ENCODE measurements at regions of chr7 and their contacts with region 1.

Region 1: DNA sequence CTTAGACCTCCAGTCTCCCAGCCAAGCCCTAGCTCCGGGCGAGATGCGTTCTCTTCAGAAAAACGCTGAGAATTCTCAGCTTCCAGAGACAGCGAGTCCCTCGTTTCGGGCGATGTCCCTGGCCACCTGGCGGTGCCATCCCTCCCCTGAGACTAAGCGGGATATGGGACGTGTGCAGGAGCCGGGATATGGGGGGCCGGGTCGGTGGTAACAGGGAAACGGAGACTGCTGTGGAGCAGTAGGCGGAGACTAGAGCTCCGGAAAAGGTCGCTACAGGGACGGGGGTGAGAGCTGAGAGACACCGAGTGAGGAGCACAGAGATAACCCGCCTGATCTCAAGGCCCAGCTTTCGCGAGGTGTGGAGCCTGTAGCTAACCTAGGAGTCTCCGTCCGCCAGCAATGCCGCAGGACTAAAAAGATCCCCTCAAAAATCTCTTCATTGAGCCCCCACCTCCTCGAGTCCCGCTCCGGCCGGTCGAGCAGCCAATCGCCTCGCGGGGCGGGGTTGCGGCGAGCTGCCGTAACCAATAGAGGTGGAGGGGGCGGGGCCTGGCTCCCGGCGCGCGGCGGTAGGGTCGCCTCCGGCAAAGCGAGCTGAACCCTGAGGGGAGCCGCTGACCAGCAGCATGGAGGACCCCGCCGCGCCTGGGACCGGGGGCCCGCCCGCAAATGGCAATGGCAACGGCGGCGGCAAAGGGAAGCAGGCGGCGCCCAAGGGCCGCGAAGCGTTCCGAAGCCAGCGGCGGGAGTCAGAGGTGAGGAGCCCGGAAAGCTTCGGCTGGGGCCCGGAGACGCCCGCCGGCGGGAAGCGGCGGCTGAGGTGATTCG is at the start of gene STRIP2:
- DNase-seq: peak; percentile 98 to 99 (median 99)
- ATAC-seq: peak; percentile 90
- H3K4me3 ChIP-seq: peak within 1 kb of the TSS; percentile 60
- H3K27ac ChIP-seq: peak within 1 kb of the TSS; percentile 67
- H3K4me1 ChIP-seq: peaks cover 37 to 50% of the 10 kb centered on the region in 2 experiments
- H3K27me3 ChIP-seq: no peaks in the 10 kb centered on the region
- CTCF ChIP-seq: 0 out of 6 replicates have a peak, but pooled peaks of 2 of the 3 experiments have one; percentile 18 to 20
- EP300 ChIP-seq: 0 out of 2 replicates have a peak, but pooled peaks have one; percentile 12
- POLR2A ChIP-seq: peak; percentile 98
- RAD21 ChIP-seq: no peak
- polyA plus RNA-seq, gene STRIP2: 10.1 to 13.8 TPM

Region 2: DNA sequence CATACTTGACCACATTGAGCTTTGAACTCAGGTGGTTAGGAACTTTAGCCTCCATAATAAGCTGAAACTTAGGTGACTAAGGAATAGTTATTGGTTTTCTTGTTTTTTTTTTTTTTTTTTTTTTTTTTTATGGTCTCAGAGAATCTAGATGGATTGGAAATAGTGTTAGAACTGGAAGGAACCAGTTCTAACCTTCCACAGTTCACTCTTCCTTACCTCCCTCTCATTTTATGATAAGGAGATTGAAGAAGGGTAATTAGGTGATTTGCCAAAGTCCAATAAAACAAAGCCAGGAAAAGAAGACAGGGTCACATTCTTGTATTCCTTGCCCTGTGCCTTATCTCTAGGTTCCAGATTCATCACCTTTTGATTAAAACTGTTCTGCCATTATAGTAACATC is 71.6 kb before region 1 on chr7:
- CTCF ChIA-PET with region 1: no interaction called
- POLR2A ChIA-PET with region 1: interaction called, 10 read pairs
- in situ Hi-C with region 1: no loop called
- intact Hi-C with region 1: no loop called
- DNase-seq: no peak
- ATAC-seq: no peak
- H3K4me3 ChIP-seq: no peak overlapping the region
- H3K27ac ChIP-seq: no peak overlapping the region
- H3K4me1 ChIP-seq: peaks cover 0 to 6% of the 10 kb centered on the region in 2 experiments; a peak in 3 of 5 replicates
- H3K27me3 ChIP-seq: no peaks in the 10 kb centered on the region
- CTCF ChIP-seq: no peak
- EP300 ChIP-seq: no peak
- POLR2A ChIP-seq: no peak
- RAD21 ChIP-seq: no peak

Region 3: GRCh38 chr7:129401967-129402860 is 31.8 kb before region 1 on chr7:
- CTCF ChIA-PET with region 1: no interaction called
- POLR2A ChIA-PET with region 1: interaction called, 11 read pairs
- in situ Hi-C with region 1: no loop called
- intact Hi-C with region 1: loop called (anchors 1 kb)
- DNase-seq: peak in 2 of 4 experiments; percentile 55 to 70
- ATAC-seq: peak; percentile 84
- H3K4me3 ChIP-seq: no peak overlapping the region
- H3K27ac ChIP-seq: peak overlapping the region; percentile 65; the same call in 2 of the 3 replicates
- H3K4me1 ChIP-seq: peaks cover 6 to 21% of the 10 kb centered on the region in 2 experiments; a peak in 4 of 5 replicates
- H3K27me3 ChIP-seq: no peaks in the 10 kb centered on the region
- CTCF ChIP-seq: peak; percentile 67 to 86 (median 68)
- EP300 ChIP-seq: no peak
- POLR2A ChIP-seq: no peak
- RAD21 ChIP-seq: peak; percentile 73 to 84

Region 4: DNA sequence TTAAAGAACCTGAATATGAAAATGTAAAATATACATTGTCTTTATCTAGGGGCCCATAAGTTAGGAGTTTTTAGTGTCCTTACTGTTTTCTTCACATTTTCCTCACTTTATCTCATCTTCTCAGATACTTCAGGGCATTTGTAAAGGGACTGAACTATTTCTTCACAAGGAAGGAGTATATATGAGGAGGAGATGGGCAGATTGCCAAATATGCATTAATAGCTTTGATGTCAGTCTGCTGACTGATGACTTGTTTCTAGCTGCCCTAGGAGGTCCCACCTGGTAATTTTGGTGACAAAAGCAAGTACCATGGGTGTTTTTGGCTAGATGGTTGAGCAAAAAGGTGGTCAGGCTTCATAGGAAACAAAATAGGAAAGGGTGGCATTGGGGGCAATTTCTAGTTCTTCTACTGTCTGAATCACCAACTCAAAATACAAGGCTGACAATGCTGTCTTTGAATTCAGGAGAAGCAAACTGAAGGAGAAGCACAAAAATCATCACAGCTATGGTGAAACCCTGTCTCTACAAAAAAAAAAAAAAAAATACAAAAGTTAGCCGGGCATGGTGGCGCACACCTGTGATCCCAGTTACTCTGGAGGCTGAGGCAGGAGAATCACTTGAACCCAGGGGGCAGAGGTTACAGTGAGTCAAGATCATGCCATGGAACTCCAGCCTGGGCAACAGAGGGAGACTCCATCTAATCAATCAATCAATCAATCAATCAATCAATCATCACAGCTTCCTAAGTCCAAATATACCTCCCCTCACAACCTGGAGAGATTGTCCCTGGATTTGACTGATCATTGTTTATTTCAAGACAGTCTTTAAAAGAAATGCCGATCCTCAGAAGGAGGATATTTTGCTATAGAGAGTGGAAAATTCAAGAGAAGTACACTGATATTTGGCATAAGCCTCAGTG is 10.1 kb before region 1 on chr7:
- CTCF ChIA-PET with region 1: no interaction called
- POLR2A ChIA-PET with region 1: interaction called, 44 read pairs
- in situ Hi-C with region 1: no loop called
- intact Hi-C with region 1: loop called (anchors 2 kb)
- DNase-seq: peak; percentile 67 to 87 (median 72)
- ATAC-seq: peak; percentile 80
- H3K4me3 ChIP-seq: no peak overlapping the region
- H3K27ac ChIP-seq: no peak overlapping the region
- H3K4me1 ChIP-seq: peaks cover 7 to 23% of the 10 kb centered on the region in 2 experiments; a peak in 4 of 5 replicates
- H3K27me3 ChIP-seq: no peaks in the 10 kb centered on the region
- CTCF ChIP-seq: no peak
- EP300 ChIP-seq: peak; percentile 74
- POLR2A ChIP-seq: no peak
- RAD21 ChIP-seq: no peak; a peak in 1 of 4 replicates

Region 5: DNA sequence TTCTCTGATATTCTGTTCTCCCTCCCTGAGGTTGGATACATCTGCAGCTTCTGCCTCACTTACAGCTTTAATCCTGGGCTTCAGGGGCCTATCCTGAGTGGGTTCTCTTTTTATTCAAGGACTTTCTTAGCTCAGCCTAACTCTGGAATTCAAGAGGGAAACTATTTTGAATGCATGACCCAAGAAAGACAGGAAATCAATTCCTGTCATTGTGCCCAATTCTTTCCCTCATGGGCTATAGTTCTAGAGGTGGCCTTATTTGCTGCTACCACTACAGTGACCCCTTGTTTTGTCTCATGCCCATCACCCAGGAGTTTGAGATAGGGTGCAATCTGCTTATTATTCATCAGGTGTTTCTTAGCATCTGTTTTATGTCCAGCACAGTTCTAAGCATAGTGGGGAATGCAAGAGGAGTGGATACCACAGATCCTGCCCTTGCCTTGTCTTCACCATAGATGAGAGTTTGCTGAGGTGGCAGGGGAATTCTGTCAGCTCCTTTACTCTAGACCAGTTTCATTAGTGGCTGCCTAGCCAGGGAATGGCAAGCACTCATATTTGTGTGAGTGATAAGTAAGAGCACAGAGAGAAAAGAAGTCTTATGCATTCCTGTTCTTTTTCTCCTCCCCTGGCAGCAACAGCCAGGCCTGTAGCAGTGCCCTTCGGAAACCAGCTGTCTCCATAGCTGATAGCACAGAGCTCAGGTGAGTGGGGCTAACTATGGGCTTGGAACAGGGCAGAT is 19.6 kb after region 1 on chr7:
- CTCF ChIA-PET with region 1: no interaction called
- POLR2A ChIA-PET with region 1: interaction called, 26 read pairs
- in situ Hi-C with region 1: no loop called
- intact Hi-C with region 1: no loop called
- DNase-seq: no peak
- ATAC-seq: no peak
- H3K4me3 ChIP-seq: no peak overlapping the region
- H3K27ac ChIP-seq: no peak overlapping the region
- H3K4me1 ChIP-seq: no peaks in the 10 kb centered on the region
- H3K27me3 ChIP-seq: no peaks in the 10 kb centered on the region
- CTCF ChIP-seq: no peak
- EP300 ChIP-seq: no peak
- POLR2A ChIP-seq: no peak
- RAD21 ChIP-seq: no peak

Region 6: DNA sequence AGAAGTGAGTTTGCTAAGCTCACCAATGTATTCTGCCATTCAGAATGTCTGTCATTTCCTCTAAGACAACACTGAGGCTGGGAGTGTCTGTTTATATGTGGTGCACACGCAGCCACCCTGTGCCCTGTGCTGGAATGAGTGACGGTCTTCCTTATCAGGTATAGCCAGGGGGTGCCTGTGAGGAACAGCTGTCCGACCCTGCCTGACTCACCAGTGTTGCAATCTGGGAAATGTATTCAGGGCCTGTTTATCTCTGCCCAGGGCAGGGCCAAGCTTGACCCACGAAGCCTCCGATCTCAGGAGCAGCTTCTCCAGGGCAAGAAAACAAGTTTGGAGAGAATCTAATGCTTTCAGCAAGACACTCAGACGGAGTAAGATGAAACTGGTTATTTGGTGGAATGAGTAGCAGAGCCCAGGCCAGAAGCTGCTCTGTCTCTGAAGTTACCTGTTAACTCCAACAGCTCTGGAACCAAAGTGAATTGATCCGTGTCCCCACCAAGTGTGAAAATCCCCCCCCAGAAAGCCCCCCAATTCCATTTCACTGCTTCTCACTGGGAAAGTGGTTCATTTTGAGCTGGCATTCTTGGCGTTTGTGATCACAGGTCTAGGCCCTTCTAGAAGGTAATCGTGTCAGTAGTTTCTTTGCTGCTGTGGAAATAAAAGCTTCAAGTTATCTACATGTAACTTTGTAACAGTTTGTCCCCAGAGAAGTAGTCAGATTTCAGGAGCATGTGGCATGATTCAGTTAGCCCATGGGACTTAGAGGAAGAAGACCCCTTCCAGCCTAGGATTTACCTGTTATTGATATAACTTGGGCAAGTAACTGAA is 524.8 kb after region 1 on chr7:
- CTCF ChIA-PET with region 1: no interaction called
- POLR2A ChIA-PET with region 1: no interaction called
- in situ Hi-C with region 1: no loop called
- intact Hi-C with region 1: loop called (anchors 5 kb)
- DNase-seq: peak; percentile 95 to 99 (median 97)
- ATAC-seq: peak; percentile 97
- H3K4me3 ChIP-seq: no peak overlapping the region
- H3K27ac ChIP-seq: peak overlapping the region; percentile 43; the same call in 2 of the 3 replicates
- H3K4me1 ChIP-seq: peaks cover 20 to 31% of the 10 kb centered on the region in 2 experiments
- H3K27me3 ChIP-seq: no peaks in the 10 kb centered on the region
- CTCF ChIP-seq: 0 out of 6 replicates have a peak, but pooled peaks of 2 of the 3 experiments have one; percentile 2 to 8
- EP300 ChIP-seq: peak; percentile 99
- POLR2A ChIP-seq: no peak
- RAD21 ChIP-seq: peak; percentile 28 to 57; a peak in 3 of 4 replicates

Measured in K562 (cell line).